Ascending aorta (tissue), 2 donors: ENCODE measurements at regions of chr7 and their contacts with region 1.

Region 1: DNA sequence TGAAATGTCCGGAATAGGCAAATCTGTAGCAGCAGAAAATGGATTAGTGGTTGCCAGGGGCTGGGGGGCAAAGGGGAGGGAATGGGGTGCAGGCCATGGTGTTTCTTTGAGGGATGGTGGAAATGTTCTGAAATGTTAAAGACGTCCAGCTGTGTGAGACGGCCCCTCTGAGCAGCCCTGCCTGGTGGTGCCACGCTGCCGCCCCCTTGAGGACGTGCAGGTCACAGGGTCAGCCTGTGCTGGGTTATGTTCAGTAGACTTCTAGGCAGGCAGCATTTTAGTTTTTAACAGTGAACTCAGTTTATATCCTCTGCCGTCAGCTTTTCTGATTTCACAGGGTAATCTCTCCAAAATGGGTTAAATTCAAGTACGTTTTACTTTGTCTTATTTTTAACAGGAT is 9.4 kb downstream of the NUB1 start:
- DNase-seq: no peak
- H3K4me3 ChIP-seq: no peak overlapping the region
- H3K27ac ChIP-seq: no peak overlapping the region
- H3K4me1 ChIP-seq: peaks cover 0 to 2% of the 10 kb centered on the region in 2 donors
- H3K27me3 ChIP-seq: no peaks in the 10 kb centered on the region
- CTCF ChIP-seq: no peak

Region 2: GRCh38 chr7:151315038-151315655 is 35.9 kb before region 1 on chr7:
- intact Hi-C with region 1: loop called (anchors 1 kb)
- DNase-seq: peak in 1 of 2 donors; percentile 88
- H3K4me3 ChIP-seq: no peak overlapping the region
- H3K27ac ChIP-seq: no peak overlapping the region
- H3K4me1 ChIP-seq: peaks cover 3 to 12% of the 10 kb centered on the region in 2 donors
- H3K27me3 ChIP-seq: no peaks in the 10 kb centered on the region
- CTCF ChIP-seq: peak; percentile 69 to 84 (median 77)

Region 3: GRCh38 chr7:151381348-151382078 is 30.5 kb after region 1 on chr7:
- intact Hi-C with region 1: no loop called
- DNase-seq: no peak
- H3K4me3 ChIP-seq: peak overlapping the region; percentile 39 to 65
- H3K27ac ChIP-seq: peak overlapping the region in 1 of 2 donors; percentile 3
- H3K4me1 ChIP-seq: peaks cover 0 to 14% of the 10 kb centered on the region in 2 donors
- H3K27me3 ChIP-seq: no peaks in the 10 kb centered on the region
- CTCF ChIP-seq: no peak